ENCODE measurements at regions of chr18 and their contacts with region 1.

Region 1: GRCh38 chr18:53004798-53005197 is 664.8 kb downstream of the DCC start:
- DNase-seq: no peak
- H3K4me3 ChIP-seq: no peak overlapping the region
- H3K27ac ChIP-seq: no peak overlapping the region
- H3K4me1 ChIP-seq: no peaks in the 10 kb centered on the region
- H3K27me3 ChIP-seq: no peaks in the 10 kb centered on the region
- CTCF ChIP-seq: no peak
- EP300 ChIP-seq: no peak
- POLR2A ChIP-seq: no peak

Region 2: DNA sequence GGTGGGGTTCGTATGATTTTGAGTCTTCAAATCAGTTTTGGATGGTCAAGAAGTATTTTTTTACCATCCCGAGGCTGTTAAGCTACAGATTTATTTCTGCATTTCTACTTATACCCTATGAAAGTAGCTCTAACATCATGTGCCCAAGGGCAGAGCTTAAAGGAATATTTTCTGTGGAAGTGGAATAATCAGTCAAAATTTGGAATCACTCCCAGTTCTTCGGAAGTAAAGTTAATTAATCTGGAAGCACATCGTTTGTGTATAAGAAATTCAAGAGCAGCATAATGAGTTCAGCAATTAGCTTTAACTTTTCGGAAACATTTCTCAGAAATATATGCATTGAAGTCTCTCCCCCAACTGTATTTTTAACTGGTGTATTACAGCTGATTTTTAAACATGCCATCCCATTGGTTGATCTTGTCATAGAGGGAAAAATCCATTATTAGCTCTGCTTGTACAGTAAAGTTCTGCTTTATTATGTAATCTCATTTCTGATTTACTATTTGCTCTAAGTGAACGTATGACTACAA is 154.7 kb before region 1 on chr18:
- intact Hi-C with region 1: loop called in 1 of 4 experiments (anchors 5 kb)
- DNase-seq: no peak
- H3K4me3 ChIP-seq: no peak overlapping the region
- H3K27ac ChIP-seq: no peak overlapping the region
- H3K4me1 ChIP-seq: no peaks in the 10 kb centered on the region
- H3K27me3 ChIP-seq: no peaks in the 10 kb centered on the region
- CTCF ChIP-seq: no peak
- EP300 ChIP-seq: no peak
- POLR2A ChIP-seq: no peak